Head of caudate nucleus (tissue), 42 donors: ENCODE measurements at regions of chr16 and their contacts with region 1.

Region 1: DNA sequence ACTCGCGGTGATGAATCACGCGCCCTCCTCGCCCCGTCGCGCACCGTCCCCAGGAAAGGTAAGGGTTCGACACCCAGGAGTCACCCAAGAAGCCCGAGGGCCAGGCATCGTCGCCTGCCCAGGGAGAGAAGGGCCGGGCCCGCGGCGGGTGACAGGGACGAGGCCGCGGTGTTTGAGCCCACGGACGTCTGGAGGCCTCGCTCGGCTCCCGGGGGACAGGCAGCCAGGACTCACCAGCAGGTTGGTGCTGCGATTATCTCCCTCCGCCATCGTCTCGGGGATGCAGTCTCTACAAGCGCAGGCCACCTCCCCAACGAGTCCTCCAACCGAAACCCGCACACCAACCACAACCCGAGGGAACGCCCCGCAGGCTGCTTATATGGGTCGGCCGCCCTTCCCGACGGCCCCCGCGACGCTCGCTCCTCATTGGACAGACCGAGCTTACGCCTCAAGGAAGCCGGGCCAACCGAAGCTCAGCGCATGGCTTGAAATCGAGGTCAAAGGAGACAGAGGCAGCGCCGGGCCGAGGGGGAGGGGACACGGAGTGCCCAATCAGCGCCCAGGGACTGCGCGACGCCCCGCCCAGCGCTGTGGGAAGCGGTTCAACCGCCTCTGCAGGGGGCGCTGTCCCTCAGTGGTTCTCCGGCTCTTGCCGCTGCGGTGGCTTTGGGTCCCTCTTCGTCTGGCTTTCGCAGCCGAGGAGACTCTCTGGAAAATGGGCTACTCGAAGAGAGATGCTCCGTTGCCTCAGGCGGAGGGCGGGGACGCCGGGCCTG is at the start of gene ARL6IP1:
- DNase-seq: peak; percentile 98 to 100 (median 99)

Region 2: DNA sequence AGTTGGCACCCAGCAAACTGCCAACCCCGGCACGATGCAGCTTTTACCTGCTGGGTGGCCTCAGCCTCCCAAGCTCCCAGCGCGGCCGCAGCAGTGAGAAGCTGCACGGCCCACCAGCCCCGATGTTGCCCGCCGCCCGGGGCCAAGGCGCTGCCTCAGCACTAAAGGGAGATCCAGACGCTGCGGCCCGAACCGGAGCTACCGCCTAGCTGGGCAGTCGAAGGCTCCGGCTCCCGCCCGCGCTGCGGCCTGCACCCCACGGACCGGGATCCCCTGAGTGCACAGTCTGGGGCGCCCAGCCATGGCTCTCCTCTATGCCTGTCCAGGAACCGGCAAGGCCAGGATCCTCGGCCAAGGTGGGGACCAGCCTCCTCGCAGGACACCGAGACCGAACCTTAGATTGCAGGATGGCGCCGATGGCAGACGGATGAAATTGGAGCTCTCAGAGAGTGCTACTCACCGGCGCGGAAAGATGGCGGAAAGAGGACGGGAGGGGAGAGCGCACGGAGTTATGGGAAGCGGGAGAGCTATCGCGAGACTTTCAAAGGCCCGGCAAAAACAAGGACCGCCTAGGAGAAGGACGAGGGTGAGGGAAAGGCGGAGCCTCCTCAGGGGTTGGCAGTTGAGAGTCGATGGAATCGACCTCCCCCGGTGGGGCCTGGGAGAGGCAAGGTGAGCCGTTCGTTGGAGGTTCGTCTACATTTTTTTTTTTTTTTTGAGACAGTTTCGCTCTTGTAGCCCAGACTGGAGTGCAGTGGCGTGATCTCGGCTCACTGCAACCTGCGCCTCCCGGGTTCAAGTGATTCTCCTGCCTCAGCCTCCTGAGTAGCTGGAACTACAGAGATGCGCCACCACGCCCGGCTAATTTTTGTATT is 11.3 kb before region 1 on chr16 and contains the start of gene RPS15A:
- intact Hi-C with region 1: loop called (anchors 1 kb)
- DNase-seq: peak; percentile 88 to 98 (median 94)

Region 3: DNA sequence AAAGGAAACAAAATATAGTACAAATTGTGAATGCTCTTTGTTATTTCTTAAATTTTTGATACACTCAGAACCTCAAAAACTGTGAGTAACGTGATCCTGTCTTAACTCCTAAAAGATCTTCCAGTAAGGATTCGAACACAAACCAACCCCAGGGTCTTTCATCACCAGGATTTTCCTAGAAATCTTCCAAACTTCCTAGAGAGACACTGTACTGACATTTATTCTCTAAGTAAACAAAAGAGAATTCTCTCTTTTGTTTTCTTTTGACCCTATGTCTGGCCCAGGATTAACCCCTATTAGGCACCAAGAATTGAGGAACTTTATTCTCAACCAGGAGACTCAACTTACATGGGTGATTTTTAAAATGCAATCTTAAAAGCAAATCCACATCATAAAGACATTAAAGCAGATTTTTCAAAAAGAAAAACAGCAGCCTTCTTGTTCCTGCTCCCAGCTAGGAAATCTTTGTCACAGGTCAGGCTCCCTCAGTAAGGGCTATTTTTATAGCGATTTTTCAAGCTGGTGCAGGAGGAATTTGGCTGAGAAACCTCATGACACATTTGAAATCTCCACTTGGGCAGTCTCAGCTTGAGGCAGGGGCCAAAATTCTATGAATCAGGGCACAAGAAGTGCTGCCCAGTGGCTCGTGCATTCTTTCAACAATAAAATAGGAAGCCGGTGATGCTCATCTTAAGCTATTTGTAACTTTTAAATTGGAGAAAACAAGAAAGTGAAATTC is 131.0 kb after region 1 on chr16:
- intact Hi-C with region 1: loop called (anchors 5 kb)
- DNase-seq: peak in 2 of 42 donors; percentile 11 to 50

Region 4: GRCh38 chr16:18969050-18969854 is 167.9 kb after region 1 on chr16:
- intact Hi-C with region 1: loop called (anchors 2 kb)
- DNase-seq: peak; percentile 76 to 98 (median 94)

Region 5: DNA sequence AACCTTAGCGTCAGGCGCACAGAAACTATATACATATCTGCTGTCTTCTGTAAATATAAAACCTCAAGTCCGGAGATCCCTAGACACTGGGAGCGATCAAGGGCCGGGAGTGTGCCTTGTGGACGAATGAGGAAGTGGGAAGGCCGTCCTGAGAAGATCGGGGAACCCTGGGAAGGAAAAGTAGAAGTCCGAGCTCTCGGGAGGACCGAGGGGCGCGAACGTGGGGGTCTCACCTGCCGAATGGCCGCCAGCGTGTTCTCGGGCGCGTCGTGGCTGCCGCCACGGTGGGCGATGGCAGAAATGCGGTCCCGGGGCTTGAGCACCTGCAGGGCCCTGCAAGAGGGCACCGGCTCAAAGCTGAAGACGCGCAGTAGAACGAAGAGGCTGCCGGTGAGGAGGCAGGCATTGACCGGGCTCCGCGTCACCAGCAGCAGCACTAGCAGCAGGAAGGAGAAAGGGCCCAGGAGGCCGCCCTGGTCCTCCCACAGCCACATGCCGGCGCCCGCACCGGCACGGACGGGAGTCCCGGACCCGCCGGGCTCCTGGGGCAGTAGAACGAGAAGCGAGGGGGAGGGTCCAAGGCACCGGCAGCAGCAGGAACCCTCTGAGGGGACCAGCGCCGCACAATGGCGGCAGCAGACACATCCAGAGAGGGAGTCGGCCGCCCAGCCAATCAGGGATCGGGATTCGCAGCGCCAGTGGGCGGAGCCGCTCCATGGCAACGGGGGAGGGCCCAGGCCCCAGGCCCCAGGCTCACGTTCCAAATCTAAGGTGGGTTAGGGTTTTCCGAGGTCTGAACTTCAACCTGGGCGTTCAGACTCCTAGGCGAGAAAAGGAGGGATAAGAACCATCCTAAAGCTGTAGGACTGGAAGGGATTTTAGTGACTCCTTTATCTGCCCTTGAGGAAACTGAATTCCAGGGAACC is 720.3 kb after region 1 on chr16 and contains the start of gene GDE1:
- intact Hi-C with region 1: loop called (anchors 10 kb)
- DNase-seq: peak; percentile 98 to 100 (median 99)